Mammary epithelial cell (primary cell): ENCODE measurements at regions of chr20 and their contacts with region 1.

Region 1: DNA sequence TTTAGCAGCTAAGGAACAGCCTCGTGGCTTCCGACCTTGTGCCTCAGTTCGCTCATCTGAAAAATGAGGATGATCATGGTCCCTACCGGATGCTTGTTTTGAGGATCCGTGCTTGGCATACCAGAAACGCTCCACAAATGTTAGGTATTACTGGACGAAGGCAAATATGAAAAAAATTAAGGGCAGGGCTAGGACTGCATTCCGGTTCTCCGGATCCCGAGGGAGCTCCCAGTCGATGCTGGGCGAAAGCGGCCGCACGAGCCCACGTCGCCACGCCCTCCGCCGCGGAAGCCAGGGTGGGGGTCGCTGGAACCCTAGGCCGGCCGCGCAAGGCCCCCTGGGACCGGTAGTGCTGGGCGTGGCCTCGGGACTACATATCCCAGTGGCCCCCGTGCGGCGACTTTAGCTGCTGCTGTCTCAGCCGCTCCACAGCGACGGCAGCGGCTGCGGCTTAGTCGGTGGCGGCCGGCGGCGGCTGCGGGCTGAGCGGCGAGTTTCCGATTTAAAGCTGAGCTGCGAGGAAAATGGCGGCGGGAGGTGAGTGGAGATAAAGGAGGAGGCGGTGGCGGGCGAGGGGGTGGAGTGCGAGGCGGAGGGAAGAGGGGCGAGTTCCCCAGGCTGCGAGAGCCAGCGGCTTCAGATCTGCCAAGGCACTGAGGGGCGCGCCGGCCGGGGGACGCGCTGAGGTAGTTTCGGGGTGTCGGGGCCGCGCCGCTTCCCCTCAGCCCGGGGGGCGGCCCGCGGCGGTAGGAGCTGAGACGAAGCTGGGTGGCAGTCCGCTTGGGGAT is at the start of gene NCOA3:
- DNase-seq: peak; percentile 92
- H3K4me3 ChIP-seq: peak within 1 kb of the TSS; percentile 81 to 99 (median 96)
- H3K27ac ChIP-seq: peak within 1 kb of the TSS; percentile 66
- H3K4me1 ChIP-seq: peaks cover 13% of the 10 kb centered on the region
- H3K27me3 ChIP-seq: no peaks in the 10 kb centered on the region
- CTCF ChIP-seq: peak in 1 of 2 donors; percentile 62
- total RNA-seq, gene NCOA3: 26.7 to 29.6 TPM

Region 2: GRCh38 chr20:47370850-47371676 is 130.6 kb before region 1 on chr20:
- CTCF ChIA-PET with region 1: no interaction called
- dilution Hi-C with region 1: loop called (anchors 5 kb)
- in situ Hi-C with region 1: no loop called
- intact Hi-C with region 1: no loop called
- DNase-seq: no peak
- H3K4me3 ChIP-seq: no peak overlapping the region
- H3K27ac ChIP-seq: no peak overlapping the region
- H3K4me1 ChIP-seq: peaks cover 9% of the 10 kb centered on the region
- H3K27me3 ChIP-seq: no peaks in the 10 kb centered on the region
- CTCF ChIP-seq: no peak

Region 3: DNA sequence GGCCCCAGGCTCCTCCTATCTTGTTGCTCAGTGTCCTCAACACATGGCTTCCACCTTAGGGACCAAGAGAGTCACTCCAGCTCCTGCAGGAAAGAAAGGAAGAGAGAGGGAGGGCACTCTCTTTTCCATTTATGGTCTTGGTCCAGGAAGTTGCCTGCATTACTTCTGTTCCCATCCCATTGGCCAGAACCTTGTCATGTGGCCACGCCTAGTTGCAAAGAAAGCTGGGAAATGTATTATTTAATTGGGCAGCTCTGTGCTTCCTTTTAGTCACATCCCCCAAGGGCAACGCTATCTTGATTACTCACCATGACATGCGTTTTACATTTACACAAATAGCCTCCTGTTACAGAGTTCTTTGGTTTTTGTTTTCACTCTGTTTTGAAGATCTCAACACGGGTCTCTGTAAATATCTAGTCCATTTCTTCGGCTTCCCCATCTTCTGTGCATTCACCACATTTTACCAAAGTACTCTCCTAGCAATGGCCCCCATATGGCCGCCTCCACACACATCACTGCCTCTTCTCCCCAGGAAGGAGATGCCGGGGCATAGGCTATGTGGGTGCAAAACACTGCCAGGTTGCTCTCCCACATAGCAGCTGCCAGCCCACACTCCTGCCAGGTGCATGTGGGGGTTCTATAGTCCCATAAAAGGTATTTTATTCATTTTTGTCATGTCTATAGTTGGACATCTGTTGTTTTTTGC is 109.5 kb before region 1 on chr20:
- CTCF ChIA-PET with region 1: no interaction called
- dilution Hi-C with region 1: loop called (anchors 5 kb)
- in situ Hi-C with region 1: no loop called
- intact Hi-C with region 1: loop called (anchors 1 kb)
- DNase-seq: peak; percentile 97
- H3K4me3 ChIP-seq: no peak overlapping the region
- H3K27ac ChIP-seq: peak overlapping the region; percentile 99
- H3K4me1 ChIP-seq: peaks cover 21% of the 10 kb centered on the region
- H3K27me3 ChIP-seq: no peaks in the 10 kb centered on the region
- CTCF ChIP-seq: no peak

Region 4: GRCh38 chr20:47464380-47465101 is 37.1 kb before region 1 on chr20:
- CTCF ChIA-PET with region 1: no interaction called
- dilution Hi-C with region 1: loop called (anchors 5 kb)
- in situ Hi-C with region 1: no loop called
- intact Hi-C with region 1: loop called (anchors 2 kb)
- DNase-seq: peak; percentile 96
- H3K4me3 ChIP-seq: no peak overlapping the region
- H3K27ac ChIP-seq: peak overlapping the region; percentile 38
- H3K4me1 ChIP-seq: peaks cover 20% of the 10 kb centered on the region
- H3K27me3 ChIP-seq: no peaks in the 10 kb centered on the region
- CTCF ChIP-seq: peak; percentile 56 to 59

Region 5: DNA sequence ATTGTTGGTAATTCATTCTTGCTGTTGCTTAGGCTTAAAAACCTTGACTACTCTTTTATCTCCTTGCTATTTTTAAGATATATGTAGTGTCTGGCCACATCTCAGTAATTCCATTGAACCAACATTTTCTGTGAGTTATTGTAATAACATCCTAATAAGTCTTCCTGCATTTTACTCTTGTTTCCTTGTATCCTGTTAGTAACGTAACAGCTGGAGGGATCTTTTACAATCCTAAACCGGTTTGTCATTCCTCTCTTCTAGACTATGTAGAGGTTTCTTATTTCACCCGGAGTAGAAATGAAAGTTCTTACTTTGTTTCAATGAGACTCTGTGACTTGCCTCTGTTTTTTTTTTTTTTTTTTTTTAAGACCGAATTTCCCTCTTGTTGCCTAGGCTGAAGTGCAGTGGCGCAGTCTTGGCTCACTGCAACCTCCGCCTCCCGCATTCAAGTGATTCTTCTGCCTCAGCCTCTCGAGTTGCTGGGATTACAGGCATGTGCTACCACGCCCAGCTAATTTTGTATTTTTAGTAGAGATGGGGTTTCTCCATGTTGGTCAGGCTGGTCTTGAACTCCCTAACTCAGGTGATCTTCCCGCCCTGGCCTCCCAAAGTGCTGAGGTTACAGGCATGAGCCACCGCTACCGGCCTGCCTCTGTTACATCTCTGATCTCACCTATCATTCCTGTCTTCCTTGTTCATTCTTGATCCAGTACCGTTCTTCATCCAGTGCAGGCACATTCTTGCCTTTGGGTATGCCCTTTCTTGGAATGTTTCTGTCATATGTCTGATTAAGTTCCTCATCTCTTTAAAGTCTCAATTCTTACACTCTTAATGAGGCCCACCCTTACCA is 44.7 kb after region 1 on chr20:
- CTCF ChIA-PET with region 1: no interaction called
- dilution Hi-C with region 1: no loop called
- in situ Hi-C with region 1: no loop called
- intact Hi-C with region 1: loop called (anchors 5 kb)
- DNase-seq: peak; percentile 51
- H3K4me3 ChIP-seq: no peak overlapping the region
- H3K27ac ChIP-seq: no peak overlapping the region
- H3K4me1 ChIP-seq: peaks cover 9% of the 10 kb centered on the region
- H3K27me3 ChIP-seq: no peaks in the 10 kb centered on the region
- CTCF ChIP-seq: peak in 1 of 2 donors; percentile 3